MCF 10A (cell line): ENCODE measurements at regions of chr3 and their contacts with region 1.

Region 1: DNA sequence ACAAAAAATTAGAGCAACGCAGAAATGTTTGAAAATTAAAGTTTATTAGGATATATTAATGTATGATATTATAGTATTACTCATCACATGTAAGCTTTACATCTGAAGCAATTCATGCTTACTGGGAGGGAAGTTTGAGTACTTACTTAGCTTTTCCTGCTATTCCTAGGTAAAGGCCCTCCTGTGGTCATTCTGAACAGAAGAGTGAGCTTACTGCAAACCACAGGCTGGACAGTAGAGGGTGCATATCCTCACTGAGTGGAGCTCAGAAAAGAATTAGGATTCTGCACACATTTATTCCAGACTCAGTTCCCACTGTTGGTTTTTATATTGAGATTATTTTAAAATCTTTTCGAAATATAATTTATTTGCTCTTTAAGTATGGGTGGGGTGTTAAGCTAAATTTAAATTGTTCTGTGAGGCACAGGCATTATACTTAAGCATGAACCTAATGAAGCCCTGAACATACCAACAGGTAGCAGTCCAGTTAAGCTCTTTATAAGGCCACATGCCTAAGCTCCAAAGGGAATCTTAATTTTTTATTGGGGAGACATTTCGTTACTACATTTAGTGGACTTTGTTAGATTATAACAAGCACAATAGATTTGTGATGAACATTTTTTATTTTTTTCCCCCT is 10.2 kb downstream of the MRPS22 start:
- DNase-seq: peak; percentile 64
- H3K4me3 Mint-ChIP-seq: no peak overlapping the region
- H3K27ac Mint-ChIP-seq: no peak overlapping the region
- H3K4me1 Mint-ChIP-seq: no peaks in the 10 kb centered on the region
- H3K27me3 Mint-ChIP-seq: no peaks in the 10 kb centered on the region
- CTCF ChIP-seq: peak; percentile 73

Region 2: GRCh38 chr3:139378587-139379241 is 24.7 kb after region 1 on chr3:
- CTCF ChIA-PET with region 1: interaction called, 18 read pairs
- POLR2A ChIA-PET with region 1: interaction called, 4 read pairs
- intact Hi-C with region 1: no loop called
- DNase-seq: no peak
- H3K4me3 Mint-ChIP-seq: no peak overlapping the region
- H3K27ac Mint-ChIP-seq: no peak overlapping the region
- H3K4me1 Mint-ChIP-seq: peaks cover 7% of the 10 kb centered on the region
- H3K27me3 Mint-ChIP-seq: no peaks in the 10 kb centered on the region
- CTCF ChIP-seq: no peak

Region 3: DNA sequence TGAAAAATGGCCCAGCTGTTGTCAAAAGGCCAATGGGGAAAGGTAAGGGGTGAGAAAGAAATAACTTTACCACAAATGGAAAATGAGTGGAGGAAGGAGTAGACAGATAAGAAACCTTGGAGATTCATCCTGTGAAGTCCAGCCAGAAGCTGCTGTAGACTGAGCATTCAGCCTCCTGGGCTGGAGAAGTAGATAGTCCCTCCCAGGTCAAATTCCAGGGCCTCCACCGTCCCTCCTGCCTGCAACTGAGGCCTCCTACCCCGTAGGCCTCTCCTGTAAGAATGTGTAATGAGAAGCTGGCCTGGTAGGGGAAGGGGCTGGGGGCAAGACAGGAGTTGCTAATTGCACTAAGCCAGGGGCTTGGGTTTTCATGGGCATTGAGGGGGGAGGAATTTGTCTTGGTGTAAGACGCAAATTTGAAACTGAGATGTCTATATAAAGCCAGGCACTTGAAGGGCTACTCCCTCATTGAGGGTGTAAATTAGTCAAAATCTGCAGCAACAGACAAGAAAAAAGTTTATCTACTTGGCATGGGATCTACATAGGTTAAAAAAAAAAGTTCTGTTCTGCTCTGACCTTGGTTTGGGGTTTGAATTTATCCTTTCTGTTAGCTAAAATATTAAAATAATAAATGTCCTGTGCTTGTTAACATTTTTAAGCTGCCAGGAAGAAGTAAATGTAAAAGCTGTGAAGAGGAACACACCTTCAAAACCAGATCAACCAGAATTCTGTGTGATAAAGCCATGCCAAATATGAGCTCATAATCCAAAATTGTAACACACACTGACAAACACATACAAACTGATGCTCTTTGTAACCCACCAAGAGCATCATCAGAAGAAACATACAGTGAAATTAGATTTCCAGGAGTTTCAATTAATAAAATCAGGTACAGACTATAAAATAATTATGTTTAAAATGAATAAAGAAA is 123.9 kb after region 1 on chr3:
- CTCF ChIA-PET with region 1: no interaction called
- POLR2A ChIA-PET with region 1: no interaction called
- intact Hi-C with region 1: no loop called
- DNase-seq: no peak
- H3K4me3 Mint-ChIP-seq: no peak overlapping the region
- H3K27ac Mint-ChIP-seq: no peak overlapping the region
- H3K4me1 Mint-ChIP-seq: no peaks in the 10 kb centered on the region
- H3K27me3 Mint-ChIP-seq: no peaks in the 10 kb centered on the region
- CTCF ChIP-seq: no peak